Colonic mucosa (tissue), 4 donors: ENCODE measurements at regions of chr1 and their contacts with region 1.

Region 1: GRCh38 chr1:75203415-75204277 is 69.5 kb downstream of the LHX8 start:
- DNase-seq: no peak
- H3K4me3 ChIP-seq: no peak overlapping the region
- H3K27ac ChIP-seq: no peak overlapping the region
- H3K4me1 ChIP-seq: no peaks in the 10 kb centered on the region
- H3K27me3 ChIP-seq: no peaks in the 10 kb centered on the region
- CTCF ChIP-seq: peak; percentile 35

Region 2: GRCh38 chr1:74771913-74772515 is 431.6 kb before region 1 on chr1:
- intact Hi-C with region 1: loop called (anchors 5 kb)
- DNase-seq: no peak
- H3K4me3 ChIP-seq: no peak overlapping the region
- H3K27ac ChIP-seq: no peak overlapping the region
- H3K4me1 ChIP-seq: no peaks in the 10 kb centered on the region
- H3K27me3 ChIP-seq: no peaks in the 10 kb centered on the region
- CTCF ChIP-seq: peak; percentile 57